H1 (cell line): ENCODE measurements at regions of chr5 and their contacts with region 1.

Region 1: GRCh38 chr5:138331449-138332368 is at the start of gene CDC25C:
- DNase-seq: peak; percentile 96 to 97
- H3K4me3 ChIP-seq: peak within 1 kb of the TSS; percentile 78 to 95 (median 90)
- H3K27ac ChIP-seq: peak within 1 kb of the TSS; percentile 76
- H3K4me1 ChIP-seq: peaks cover 0 to 2% (median 0%) of the 10 kb centered on the region in 4 experiments; a peak in 2 of 7 replicates
- H3K27me3 ChIP-seq: no peaks in the 10 kb centered on the region
- CTCF ChIP-seq: no peak
- EP300 ChIP-seq: no peak
- POLR2A ChIP-seq: peak; percentile 66 to 98
- RAD21 ChIP-seq: no peak
- total RNA-seq, gene CDC25C: 20.8 and 23.2 TPM in 2 replicates

Region 2: GRCh38 chr5:137310051-137310730 is 1021.5 kb before region 1 on chr5:
- CTCF ChIA-PET with region 1: no interaction called
- POLR2A ChIA-PET with region 1: no interaction called
- DNase-seq: no peak
- H3K4me3 ChIP-seq: no peak overlapping the region
- H3K27ac ChIP-seq: no peak overlapping the region
- H3K4me1 ChIP-seq: peaks cover 0 to 12% (median 4%) of the 10 kb centered on the region in 4 experiments
- H3K27me3 ChIP-seq: no peaks in the 10 kb centered on the region; a peak in 1 of 7 replicates
- CTCF ChIP-seq: no peak
- EP300 ChIP-seq: no peak
- POLR2A ChIP-seq: no peak
- RAD21 ChIP-seq: no peak

Region 3: DNA sequence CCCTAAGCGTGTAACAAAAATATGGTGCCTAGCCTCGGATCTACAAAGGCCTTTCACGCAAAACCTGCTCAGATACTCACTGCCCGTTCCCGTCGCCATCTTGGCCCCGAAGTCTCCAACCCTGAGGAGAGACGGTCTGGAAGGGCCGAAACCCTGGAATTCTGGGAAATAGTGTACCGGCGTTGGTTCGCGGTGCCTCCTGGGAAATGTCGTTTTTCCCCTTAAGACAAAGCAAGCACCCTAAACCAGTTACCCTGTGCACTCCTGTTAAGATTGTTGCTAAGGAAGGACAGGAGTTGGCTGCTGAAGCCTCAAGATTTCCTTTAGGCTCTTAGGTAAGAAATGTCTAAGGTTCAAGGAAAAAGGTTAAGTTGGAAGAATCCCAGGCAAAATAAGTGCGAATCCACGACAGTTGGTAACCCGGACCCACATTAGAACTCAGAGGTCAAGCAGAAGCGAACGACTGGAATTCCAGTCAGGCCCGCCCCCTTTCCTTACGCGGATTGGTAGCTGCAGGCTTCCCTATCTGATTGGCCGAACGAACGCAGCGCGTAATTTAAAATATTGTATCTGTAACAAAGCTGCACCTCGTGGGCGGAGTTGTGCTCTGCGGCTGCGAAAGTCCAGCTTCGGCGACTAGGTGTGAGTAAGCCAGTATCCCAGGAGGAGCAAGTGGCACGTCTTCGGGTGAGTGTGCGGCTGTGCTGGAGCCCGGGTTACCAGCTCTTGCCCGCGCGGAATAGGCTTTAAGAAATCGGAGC is 153.0 kb before region 1 on chr5 and contains the starts of genes BRD8 and KIF20A:
- CTCF ChIA-PET with region 1: no interaction called
- POLR2A ChIA-PET with region 1: interaction called, 18 read pairs
- DNase-seq: peak; percentile 86 to 90
- H3K4me3 ChIP-seq: peak within 1 kb of the TSS; percentile 91 to 100 (median 96)
- H3K27ac ChIP-seq: peak within 1 kb of the TSS; percentile 91
- H3K4me1 ChIP-seq: no peaks in the 10 kb centered on the region; a peak in 2 of 7 replicates
- H3K27me3 ChIP-seq: no peaks in the 10 kb centered on the region
- CTCF ChIP-seq: no peak
- EP300 ChIP-seq: no peak
- POLR2A ChIP-seq: peak; percentile 82 to 84
- RAD21 ChIP-seq: no peak
- total RNA-seq, gene BRD8: 75.8 and 78.5 TPM in 2 replicates
- total RNA-seq, gene KIF20A: 67.1 and 68.1 TPM in 2 replicates

Region 4: GRCh38 chr5:138316355-138316754 is 15.4 kb before region 1 on chr5:
- CTCF ChIA-PET with region 1: interaction called, 4 read pairs
- POLR2A ChIA-PET with region 1: interaction called, 14 read pairs
- DNase-seq: no peak
- H3K4me3 ChIP-seq: no peak overlapping the region
- H3K27ac ChIP-seq: no peak overlapping the region
- H3K4me1 ChIP-seq: no peaks in the 10 kb centered on the region
- H3K27me3 ChIP-seq: no peaks in the 10 kb centered on the region
- CTCF ChIP-seq: no peak
- EP300 ChIP-seq: no peak
- POLR2A ChIP-seq: no peak
- RAD21 ChIP-seq: no peak

Region 5: DNA sequence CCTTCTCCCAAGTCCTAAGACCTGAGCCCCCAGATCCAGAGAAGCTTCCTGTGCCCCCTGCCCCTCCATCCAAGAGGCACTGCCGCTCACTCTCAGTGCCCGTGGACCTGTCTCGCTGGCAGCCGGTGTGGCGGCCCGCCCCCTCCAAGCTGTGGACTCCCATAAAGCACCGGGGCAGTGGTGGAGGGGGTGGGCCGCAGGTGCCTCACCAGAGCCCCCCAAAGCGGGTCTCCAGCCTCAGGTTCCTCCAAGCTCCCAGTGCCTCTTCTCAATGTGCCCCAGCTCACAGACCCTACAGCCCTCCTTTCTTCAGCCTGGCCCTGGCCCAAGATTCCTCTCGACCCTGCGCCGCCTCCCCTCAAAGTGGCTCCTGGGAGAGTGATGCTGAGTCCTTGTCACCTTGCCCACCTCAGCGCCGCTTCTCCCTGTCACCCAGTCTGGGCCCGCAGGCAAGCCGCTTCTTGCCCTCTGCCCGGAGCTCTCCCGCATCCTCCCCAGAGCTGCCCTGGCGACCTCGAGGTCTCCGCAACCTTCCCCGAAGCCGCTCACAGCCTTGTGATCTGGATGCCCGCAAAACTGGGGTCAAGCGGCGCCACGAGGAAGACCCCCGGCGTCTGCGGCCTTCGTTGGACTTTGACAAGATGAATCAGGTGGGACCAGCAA is 13.4 kb after region 1 on chr5:
- CTCF ChIA-PET with region 1: interaction called, 196 read pairs
- POLR2A ChIA-PET with region 1: interaction called, 254 read pairs
- DNase-seq: no peak
- H3K4me3 ChIP-seq: no peak overlapping the region
- H3K27ac ChIP-seq: no peak overlapping the region
- H3K4me1 ChIP-seq: no peaks in the 10 kb centered on the region; a peak in 1 of 7 replicates
- H3K27me3 ChIP-seq: no peaks in the 10 kb centered on the region
- CTCF ChIP-seq: no peak
- EP300 ChIP-seq: no peak
- POLR2A ChIP-seq: no peak
- RAD21 ChIP-seq: no peak